Activated T-helper 2 cell treated with anti-CD3 and anti-CD28 coated beads, Interferon-gamma antibody, Interleukin-2, Interleukin-4, amounts not matched to agents 10 μg/mL and 5 μg/mL and 100 μg/mL, durations not matched to agents 14 hours and 24 hours and 36 hours (primary cell): ENCODE measurements at regions of chr13 and their contacts with region 1.

Region 1: DNA sequence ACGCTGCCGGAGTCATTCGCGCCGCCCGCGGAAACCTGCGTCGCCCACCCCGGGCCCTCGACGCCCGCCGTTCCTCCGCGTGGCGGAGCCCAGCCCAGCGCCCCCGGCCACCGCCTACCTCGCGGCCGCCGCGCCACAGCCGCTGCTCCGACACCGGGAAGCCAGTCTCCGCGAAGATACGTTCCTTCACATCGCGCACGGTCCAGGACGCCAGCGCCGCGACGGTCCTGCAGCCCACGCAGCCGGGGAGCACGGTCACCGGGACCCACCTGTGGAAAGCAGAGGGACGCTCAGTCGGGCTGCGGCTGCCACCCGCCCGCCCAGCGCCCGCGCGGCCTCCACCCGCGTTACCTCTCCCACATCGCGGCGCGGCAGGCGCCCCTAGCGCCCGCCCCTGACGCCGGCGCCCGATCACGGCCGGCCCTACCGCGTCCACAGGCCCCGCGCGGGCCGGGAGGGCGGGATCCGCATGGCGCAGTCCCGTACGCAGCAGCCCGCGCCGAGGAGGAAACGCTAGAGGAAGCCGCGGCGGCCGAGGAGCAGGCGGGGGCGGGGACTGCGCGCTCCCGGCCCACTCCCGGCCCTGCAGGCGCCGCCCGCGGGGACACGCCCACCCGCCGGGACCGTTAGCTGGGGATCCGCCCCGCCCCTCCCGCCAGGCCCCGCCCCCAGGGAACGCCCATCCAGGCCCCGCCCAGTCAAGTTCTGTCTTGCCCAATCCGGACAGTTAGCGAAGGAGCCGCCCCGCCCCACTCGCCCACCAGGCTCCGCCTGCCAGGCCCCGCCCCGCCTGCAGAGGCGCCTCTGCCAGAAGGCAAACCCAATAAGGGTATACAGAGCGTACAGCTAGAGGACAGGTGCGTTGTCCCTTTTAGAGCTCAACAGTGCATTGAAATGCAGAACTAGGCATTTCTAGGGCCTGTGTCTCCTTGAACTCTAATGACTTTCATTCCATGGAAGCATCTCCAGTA is 58.2 kb downstream of the SACS start:
- DNase-seq: peak; percentile 90
- H3K4me3 Mint-ChIP-seq: peak overlapping the region; percentile 72
- H3K27ac Mint-ChIP-seq: no peak overlapping the region
- H3K4me1 Mint-ChIP-seq: peaks cover 65% of the 10 kb centered on the region
- H3K27me3 Mint-ChIP-seq: peaks cover 2% of the 10 kb centered on the region

Region 2: DNA sequence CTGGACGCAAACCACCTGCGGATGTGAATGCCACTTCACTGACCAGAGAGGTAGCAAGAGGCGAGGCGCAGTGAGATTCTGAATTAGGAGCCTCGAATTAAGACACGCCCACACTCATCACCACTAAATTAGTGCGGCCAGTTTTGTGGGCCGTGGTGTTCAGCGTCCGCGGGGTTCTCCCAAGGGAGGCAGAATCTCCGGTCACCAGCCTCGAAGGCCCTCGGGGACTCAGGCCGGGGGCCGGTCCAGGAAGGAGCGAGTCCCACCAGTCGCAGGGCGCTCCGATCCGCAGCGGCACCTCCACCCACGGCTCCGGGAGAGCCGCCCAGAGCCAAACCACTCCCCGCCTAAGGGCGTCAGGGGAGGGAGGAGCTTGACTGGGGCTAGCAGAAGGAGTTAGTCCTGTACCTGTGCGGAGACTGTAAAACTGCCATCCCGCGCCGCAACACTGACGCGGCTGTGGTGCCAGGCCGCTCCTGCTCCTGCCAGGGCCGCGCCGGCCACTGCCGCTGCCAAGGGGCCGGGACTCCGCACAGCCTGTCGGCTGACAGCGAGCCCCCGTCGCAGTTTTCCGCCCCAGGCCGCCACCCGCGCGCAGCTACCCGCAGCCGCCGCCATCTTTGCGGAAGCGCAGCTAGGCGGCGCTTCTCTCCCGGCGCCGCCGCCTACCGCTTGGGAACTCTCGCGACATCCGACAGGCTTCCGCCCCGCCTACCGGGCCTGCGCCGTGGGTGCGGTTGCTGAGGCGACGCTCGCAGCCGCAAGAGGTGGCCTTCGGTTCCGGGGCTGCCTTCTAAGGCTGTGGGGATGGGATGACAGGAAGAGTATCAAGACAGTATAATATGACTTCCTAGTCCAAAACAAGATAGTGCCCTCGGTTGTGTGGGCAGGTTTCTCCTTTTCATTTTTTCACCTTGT is 1771.5 kb before region 1 on chr13 and contains the start of gene MICU2:
- intact Hi-C with region 1: loop called (anchors 10 kb)
- DNase-seq: peak; percentile 94
- H3K4me3 Mint-ChIP-seq: peak within 1 kb of the TSS; percentile 81
- H3K27ac Mint-ChIP-seq: peak within 1 kb of the TSS; percentile 85
- H3K4me1 Mint-ChIP-seq: peaks cover 22% of the 10 kb centered on the region
- H3K27me3 Mint-ChIP-seq: peaks cover 11% of the 10 kb centered on the region
- total RNA-seq, gene MICU2: 36.6 and 38.8 TPM in 2 replicates

Region 3: GRCh38 chr13:23386533-23386932 is 11.2 kb after region 1 on chr13:
- intact Hi-C with region 1: loop called (anchors 1 kb)
- DNase-seq: no peak
- H3K4me3 Mint-ChIP-seq: peak overlapping the region; percentile 6
- H3K27ac Mint-ChIP-seq: peak overlapping the region; percentile 44
- H3K4me1 Mint-ChIP-seq: peaks cover 36% of the 10 kb centered on the region
- H3K27me3 Mint-ChIP-seq: peaks cover 2% of the 10 kb centered on the region

Region 4: GRCh38 chr13:23752111-23753001 is 377.1 kb after region 1 on chr13:
- intact Hi-C with region 1: loop called (anchors 5 kb)
- DNase-seq: no peak
- H3K4me3 Mint-ChIP-seq: no peak overlapping the region
- H3K27ac Mint-ChIP-seq: peak overlapping the region; percentile 65
- H3K4me1 Mint-ChIP-seq: peaks cover 41% of the 10 kb centered on the region
- H3K27me3 Mint-ChIP-seq: peaks cover 9% of the 10 kb centered on the region

Region 5: GRCh38 chr13:23966691-23967615 is 591.7 kb after region 1 on chr13:
- intact Hi-C with region 1: loop called (anchors 2 kb)
- DNase-seq: peak; percentile 24
- H3K4me3 Mint-ChIP-seq: peak overlapping the region; percentile 73
- H3K27ac Mint-ChIP-seq: peak overlapping the region; percentile 87
- H3K4me1 Mint-ChIP-seq: peaks cover 31% of the 10 kb centered on the region
- H3K27me3 Mint-ChIP-seq: no peaks in the 10 kb centered on the region

Region 6: GRCh38 chr13:24270639-24271141 is 895.4 kb after region 1 on chr13:
- intact Hi-C with region 1: loop called (anchors 2 kb)
- DNase-seq: peak; percentile 61
- H3K4me3 Mint-ChIP-seq: peak overlapping the region; percentile 97
- H3K27ac Mint-ChIP-seq: peak overlapping the region; percentile 95
- H3K4me1 Mint-ChIP-seq: peaks cover 81% of the 10 kb centered on the region
- H3K27me3 Mint-ChIP-seq: no peaks in the 10 kb centered on the region

Region 7: GRCh38 chr13:24288870-24289269 is 913.6 kb after region 1 on chr13:
- intact Hi-C with region 1: no loop called
- DNase-seq: no peak
- H3K4me3 Mint-ChIP-seq: no peak overlapping the region
- H3K27ac Mint-ChIP-seq: no peak overlapping the region
- H3K4me1 Mint-ChIP-seq: no peaks in the 10 kb centered on the region
- H3K27me3 Mint-ChIP-seq: no peaks in the 10 kb centered on the region